ENCODE measurements at regions of chr10 and their contacts with region 1.

Region 1: GRCh38 chr10:99412099-99412498 is 18.3 kb downstream of the GOT1 start:
- DNase-seq: no peak
- H3K4me3 ChIP-seq: no peak overlapping the region
- H3K27ac ChIP-seq: no peak overlapping the region
- H3K4me1 ChIP-seq: no peaks in the 10 kb centered on the region
- CTCF ChIP-seq: no peak

Region 2: DNA sequence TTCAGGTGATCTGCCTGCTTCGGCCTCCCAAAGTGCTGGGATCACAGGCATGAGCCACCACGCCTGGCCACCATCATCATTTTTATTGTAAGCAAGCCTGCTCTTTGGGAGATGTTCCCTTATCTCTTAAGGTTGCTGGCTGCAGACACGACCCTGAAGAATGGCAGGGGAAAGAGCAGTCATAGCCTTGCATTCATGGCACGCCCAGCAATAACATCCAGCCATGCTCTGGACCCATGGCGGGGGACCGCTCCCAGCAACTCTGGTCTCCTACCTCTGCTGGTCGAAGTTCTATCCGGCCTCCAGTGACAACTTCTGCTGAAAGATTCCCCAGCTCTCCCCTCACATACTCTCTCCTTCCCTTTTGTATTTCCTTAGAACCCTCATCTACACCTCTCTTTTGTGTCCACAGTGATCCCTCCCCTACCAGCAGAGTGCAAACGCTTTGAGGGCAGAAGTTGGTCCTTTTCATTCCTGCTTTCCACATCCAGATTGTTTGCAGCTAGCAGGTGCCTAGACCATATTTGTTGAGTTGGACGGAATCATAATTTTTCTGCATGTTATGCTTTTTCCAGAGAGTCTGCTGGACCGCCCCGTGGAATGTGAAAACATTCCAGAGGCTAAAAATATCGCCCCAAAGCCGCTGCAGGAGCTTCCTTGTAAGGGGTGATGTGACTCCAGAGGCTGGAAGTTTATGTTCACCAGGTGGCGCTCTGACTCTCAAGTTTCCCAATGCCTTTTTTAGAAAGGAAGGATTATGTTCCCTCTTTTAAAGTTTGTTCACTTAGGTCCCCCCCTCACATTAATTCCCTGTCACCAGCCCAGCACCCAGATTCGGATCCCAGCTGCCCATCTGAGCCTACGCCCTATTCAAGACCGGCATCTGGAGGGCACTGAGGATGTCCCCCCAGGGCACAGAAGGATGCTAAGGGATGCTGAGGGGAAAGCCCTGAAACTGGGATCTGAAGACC is 1702.8 kb before region 1 on chr10:
- CTCF ChIA-PET with region 1: interaction called, 10 read pairs
- POLR2A ChIA-PET with region 1: no interaction called
- intact Hi-C with region 1: no loop called
- DNase-seq: peak; percentile 41
- H3K4me3 ChIP-seq: no peak overlapping the region
- H3K27ac ChIP-seq: no peak overlapping the region
- H3K4me1 ChIP-seq: no peaks in the 10 kb centered on the region
- CTCF ChIP-seq: peak; percentile 92

Region 3: DNA sequence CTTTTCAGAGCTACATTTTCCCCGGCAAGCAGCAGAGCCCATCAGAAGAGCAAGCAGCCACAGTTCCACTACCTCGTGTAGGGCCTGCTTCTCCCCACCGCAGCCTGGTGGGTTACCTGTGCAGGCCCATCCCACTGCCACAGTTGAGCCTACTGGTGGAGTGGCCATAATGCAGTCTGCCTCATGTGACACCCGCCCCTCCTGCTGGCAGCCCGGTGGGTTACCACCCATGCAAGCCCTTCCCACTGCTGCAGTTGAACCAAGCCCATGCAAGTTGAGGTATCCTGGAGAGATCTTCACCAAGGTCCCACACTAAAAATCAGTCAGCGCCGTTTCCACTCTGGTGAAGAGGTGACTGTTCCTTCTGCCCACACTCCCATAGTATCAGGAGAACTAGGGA is 115.1 kb before region 1 on chr10:
- CTCF ChIA-PET with region 1: no interaction called
- POLR2A ChIA-PET with region 1: no interaction called
- intact Hi-C with region 1: no loop called
- DNase-seq: no peak
- H3K4me3 ChIP-seq: no peak overlapping the region
- H3K27ac ChIP-seq: no peak overlapping the region
- H3K4me1 ChIP-seq: no peaks in the 10 kb centered on the region
- CTCF ChIP-seq: no peak